ENCODE measurements at regions of chrX and their contacts with region 1.

Region 1: DNA sequence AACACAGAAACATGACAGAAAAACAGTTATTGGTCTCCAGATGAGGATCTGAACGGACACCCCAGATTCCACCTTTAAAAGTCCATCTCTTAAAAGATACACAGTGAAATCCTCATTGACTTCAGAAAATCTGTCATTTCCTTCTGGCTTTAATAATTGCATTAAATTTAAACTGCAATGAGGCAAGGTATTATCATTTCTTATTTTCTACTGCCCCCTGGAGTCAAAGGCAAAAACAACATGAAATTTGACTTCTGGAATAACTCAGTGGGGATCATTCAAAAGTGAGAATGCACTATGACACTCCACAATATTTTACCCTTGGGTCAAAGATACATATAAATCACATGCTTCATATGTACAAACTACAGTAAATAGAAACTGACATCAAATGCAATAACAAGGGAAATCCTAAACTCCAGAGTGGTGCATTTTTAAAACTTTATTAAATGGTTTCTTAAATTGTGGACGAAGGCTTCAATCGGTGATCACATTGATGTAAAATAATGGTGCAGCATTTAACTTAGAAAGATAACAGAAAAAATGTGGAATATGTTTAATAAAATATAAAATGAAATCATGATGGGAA is 56.4 kb upstream of the SPANXN1 start:
- DNase-seq: peak; percentile 67
- ATAC-seq: peak; percentile 24; the same call in 1 of the 2 replicates
- H3K4me3 ChIP-seq: no peak overlapping the region
- H3K27ac ChIP-seq: no peak overlapping the region
- H3K4me1 ChIP-seq: no peaks in the 10 kb centered on the region
- H3K27me3 ChIP-seq: no peaks in the 10 kb centered on the region
- CTCF ChIP-seq: peak; percentile 72

Region 2: DNA sequence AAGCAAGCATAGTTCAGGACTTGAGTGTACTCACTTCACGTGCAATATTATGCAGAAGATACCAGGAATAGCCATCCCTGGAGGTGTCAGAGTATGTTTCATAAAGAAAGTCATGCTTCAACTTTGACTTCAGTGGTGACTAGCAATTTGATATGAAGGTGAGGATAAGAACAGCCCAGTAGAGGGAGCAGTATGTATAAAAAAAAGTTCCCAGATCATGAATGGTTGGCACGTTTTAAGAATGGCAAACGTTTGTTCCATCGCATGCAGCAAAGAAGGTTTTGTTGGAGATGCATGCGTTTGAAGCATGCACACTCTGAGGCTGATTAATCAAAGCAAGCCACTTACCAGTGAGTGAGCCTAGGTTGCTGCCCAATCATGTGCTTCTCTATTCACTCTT is 1521.5 kb before region 1 on chrX:
- CTCF ChIA-PET with region 1: interaction called, 4 read pairs
- POLR2A ChIA-PET with region 1: no interaction called
- intact Hi-C with region 1: loop called (anchors 2 kb)
- DNase-seq: peak; percentile 53
- ATAC-seq: no peak; the same call in 1 of the 2 replicates
- H3K4me3 ChIP-seq: no peak overlapping the region
- H3K27ac ChIP-seq: no peak overlapping the region
- H3K4me1 ChIP-seq: no peaks in the 10 kb centered on the region
- H3K27me3 ChIP-seq: no peaks in the 10 kb centered on the region
- CTCF ChIP-seq: peak; percentile 62

Region 3: DNA sequence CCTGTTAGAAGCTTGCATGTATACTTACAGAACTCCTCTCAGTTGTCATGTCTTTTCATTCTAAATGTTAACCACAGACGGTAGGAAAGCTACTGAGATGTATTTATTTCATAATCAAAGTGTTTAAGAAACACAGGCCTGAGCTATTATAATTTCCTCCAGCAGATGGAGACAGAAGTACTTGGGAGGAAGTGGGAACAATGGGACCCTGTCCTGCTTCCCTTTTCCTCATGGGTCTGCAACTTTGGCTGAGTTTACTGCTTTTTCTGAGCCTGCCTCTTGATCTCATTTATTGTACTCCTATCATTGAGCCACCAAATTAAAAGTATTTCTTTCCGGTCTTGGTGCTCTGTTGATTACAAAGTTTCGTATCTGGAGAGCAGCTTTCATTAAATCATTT is 1402.6 kb before region 1 on chrX:
- CTCF ChIA-PET with region 1: no interaction called
- POLR2A ChIA-PET with region 1: no interaction called
- intact Hi-C with region 1: loop called (anchors 5 kb)
- DNase-seq: peak; percentile 63
- ATAC-seq: no peak
- H3K4me3 ChIP-seq: no peak overlapping the region
- H3K27ac ChIP-seq: no peak overlapping the region
- H3K4me1 ChIP-seq: no peaks in the 10 kb centered on the region
- H3K27me3 ChIP-seq: no peaks in the 10 kb centered on the region
- CTCF ChIP-seq: peak; percentile 68